Head of caudate nucleus (tissue), 42 donors: ENCODE measurements at regions of chr3 and their contacts with region 1.

Region 1: DNA sequence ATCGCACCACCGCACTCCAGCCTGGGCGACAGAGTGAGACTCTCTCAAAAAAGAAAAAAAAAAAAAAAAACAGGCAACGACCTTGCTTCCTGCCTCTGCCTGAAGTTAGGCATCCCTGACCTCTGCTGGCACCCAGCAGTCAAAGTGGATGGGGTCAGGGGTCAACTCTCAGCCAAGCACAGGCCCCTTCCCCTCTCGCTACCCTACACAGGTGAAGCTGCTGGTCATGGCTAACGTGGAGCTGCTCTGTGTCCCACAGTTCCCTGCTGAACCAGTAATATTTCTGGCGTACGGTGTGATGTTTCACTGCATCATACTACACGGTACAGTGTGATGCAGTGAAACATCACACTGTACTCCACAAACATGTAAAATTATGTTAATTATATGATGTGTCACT is 13.9 kb upstream of the FRG2C start:
- DNase-seq: no peak

Region 2: DNA sequence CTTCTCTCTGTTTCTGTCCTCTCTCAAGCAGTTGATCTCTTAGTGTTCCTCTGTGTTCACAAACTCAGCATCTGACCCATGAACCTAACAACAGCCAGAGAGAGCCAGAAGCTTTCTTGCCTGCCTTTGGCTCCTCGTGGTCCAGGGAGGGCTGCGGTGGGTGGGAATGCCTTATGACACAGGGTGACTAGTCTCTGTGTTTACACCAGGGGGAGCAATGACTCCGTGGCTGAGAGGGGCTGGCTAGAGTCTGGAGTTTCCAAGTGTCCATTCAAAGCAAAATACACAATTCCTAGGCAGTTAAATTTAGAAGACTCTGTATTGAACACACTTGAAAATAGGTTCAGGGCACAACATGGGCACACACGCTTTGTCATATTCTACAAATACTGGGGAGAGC is 356.1 kb before region 1 on chr3:
- intact Hi-C with region 1: loop called (anchors 10 kb)
- DNase-seq: peak in 38 of 42 donors; percentile 2 to 71 (median 27)

Region 3: GRCh38 chr3:75320369-75320768 is 329.8 kb before region 1 on chr3:
- intact Hi-C with region 1: no loop called
- DNase-seq: no peak

Region 4: DNA sequence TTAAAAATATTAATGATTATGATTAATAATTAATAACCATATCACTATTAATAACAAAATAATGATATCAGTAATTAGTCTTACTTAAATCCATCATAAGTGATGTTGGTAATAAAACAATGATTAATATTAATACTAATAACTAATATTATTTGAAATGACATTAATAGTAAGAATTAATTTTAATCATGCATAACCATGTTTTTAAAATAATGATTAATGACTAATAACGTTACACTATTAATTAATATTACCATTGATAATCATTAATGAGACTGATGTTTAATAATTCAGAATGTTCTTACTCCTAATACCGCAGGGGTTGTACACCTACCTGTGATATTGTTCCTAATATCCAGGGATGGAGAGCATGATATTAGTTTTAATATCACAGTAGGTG is 39.4 kb before region 1 on chr3:
- intact Hi-C with region 1: no loop called
- DNase-seq: no peak

Region 5: GRCh38 chr3:75768303-75769017 is 118.3 kb after region 1 on chr3:
- intact Hi-C with region 1: no loop called
- DNase-seq: no peak